Sigmoid colon (tissue), 7 donors: ENCODE measurements at regions of chr4 and their contacts with region 1.

Region 1: GRCh38 chr4:815464-816146 is 10.3 kb downstream of the CPLX1 start:
- DNase-seq: peak; percentile 69
- H3K4me3 ChIP-seq: no peak overlapping the region
- H3K27ac ChIP-seq: peak overlapping the region in 3 of 4 donors; percentile 17 to 62 (median 25)
- H3K4me1 ChIP-seq: peaks cover 0 to 22% (median 19%) of the 10 kb centered on the region in 4 donors
- H3K27me3 ChIP-seq: peaks cover 0 to 19% (median 14%) of the 10 kb centered on the region in 3 donors
- CTCF ChIP-seq: no peak
- EP300 ChIP-seq: no peak
- POLR2A ChIP-seq: no peak

Region 2: DNA sequence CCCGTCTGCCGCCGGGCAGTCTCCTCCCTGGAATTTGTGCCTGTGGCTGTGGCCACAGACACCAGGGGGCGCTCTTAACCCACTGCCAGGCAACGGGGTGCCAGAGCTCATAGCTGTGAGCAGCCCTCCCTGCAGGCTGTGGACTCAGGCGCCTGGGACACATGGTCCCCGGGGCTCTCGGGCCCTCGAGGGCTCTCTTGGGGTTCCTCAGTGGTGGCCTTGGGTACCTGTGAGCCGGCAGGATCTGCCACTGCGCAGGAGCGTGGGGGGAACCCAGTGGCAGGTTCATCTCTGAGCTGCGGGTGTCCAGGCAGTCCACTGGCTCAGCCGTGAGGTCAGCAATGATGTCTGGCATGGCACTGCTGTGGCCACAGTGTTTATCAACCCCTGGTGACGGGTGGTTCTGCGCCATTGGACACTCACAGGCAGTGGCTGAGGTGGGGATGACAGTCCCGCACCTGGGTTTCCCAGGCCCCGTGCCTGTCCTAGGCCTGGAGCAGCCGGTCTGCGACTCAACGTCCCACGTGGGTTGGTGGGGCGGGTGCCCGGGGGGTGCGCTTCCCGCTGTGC is 72.8 kb before region 1 on chr4:
- intact Hi-C with region 1: loop called (anchors 5 kb)
- DNase-seq: peak; percentile 80
- H3K4me3 ChIP-seq: no peak overlapping the region
- H3K27ac ChIP-seq: no peak overlapping the region
- H3K4me1 ChIP-seq: no peaks in the 10 kb centered on the region
- H3K27me3 ChIP-seq: no peaks in the 10 kb centered on the region
- CTCF ChIP-seq: peak; percentile 56 to 95 (median 79)
- EP300 ChIP-seq: no peak
- POLR2A ChIP-seq: no peak

Region 3: DNA sequence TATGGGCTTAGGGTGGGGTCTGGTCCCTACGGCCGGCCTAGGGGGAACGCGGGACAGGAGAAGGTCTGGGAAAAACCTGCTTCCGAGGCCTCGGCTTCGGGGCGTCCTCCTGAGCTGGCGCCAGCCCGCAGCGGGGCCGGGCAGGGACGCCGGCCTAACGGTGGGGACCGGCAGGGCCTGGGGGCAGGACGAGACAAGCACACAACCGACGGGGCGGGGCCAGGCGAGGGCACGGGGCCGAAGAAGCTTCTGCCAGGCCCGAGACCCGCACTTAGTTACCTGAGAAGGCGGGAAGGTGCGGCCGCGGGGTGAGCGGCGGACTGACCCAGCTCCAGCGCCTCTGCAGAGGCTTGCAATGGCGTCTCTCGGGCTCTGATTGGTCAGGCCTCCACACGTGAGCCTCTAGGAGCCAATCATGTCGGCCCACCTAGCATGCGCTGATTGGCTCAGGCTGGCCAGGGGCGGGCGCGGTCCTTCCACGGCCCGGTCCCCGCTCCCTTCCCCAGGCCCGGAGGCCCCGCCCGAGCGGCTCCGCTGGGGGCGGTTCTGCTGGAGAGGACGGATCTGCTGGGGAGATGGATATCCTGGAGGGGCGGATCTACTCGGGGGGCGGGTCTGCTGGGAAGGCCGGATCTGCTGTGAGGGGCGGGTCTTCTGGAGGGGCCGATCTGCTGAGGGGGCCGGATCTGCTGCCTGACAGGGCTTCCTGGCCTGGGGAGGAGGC is 34.0 kb before region 1 on chr4:
- intact Hi-C with region 1: loop called (anchors 1 kb)
- DNase-seq: peak; percentile 99
- H3K4me3 ChIP-seq: peak overlapping the region; percentile 74 to 98 (median 92)
- H3K27ac ChIP-seq: peak overlapping the region; percentile 89 to 96 (median 94)
- H3K4me1 ChIP-seq: peaks cover 0 to 69% (median 49%) of the 10 kb centered on the region in 4 donors
- H3K27me3 ChIP-seq: peaks cover 19 to 25% (median 23%) of the 10 kb centered on the region in 3 donors
- CTCF ChIP-seq: no peak
- EP300 ChIP-seq: no peak
- POLR2A ChIP-seq: peak; percentile 91 to 96